Endothelial cell of umbilical vein (primary cell): ENCODE measurements at regions of chr11 and their contacts with region 1.

Region 1: GRCh38 chr11:45771566-45772448 is 33.1 kb upstream of the SLC35C1 start:
- DNase-seq: peak; percentile 78
- H3K4me3 ChIP-seq: peak overlapping the region; percentile 39 to 54 (median 50)
- H3K27ac ChIP-seq: no peak overlapping the region
- H3K4me1 ChIP-seq: peaks cover 5% of the 10 kb centered on the region
- H3K27me3 ChIP-seq: peaks cover 0 to 1% of the 10 kb centered on the region in 2 experiments
- CTCF ChIP-seq: peak; percentile 95 to 98
- POLR2A ChIP-seq: no peak

Region 2: GRCh38 chr11:45252134-45252855 is 519.5 kb before region 1 on chr11:
- CTCF ChIA-PET with region 1: interaction called, 17 read pairs
- POLR2A ChIA-PET with region 1: no interaction called
- dilution Hi-C with region 1: no loop called
- intact Hi-C with region 1: no loop called
- DNase-seq: peak; percentile 14
- H3K4me3 ChIP-seq: no peak overlapping the region
- H3K27ac ChIP-seq: no peak overlapping the region
- H3K4me1 ChIP-seq: no peaks in the 10 kb centered on the region
- H3K27me3 ChIP-seq: peaks cover 2 to 8% of the 10 kb centered on the region in 2 experiments
- CTCF ChIP-seq: peak; percentile 71 to 76
- POLR2A ChIP-seq: no peak

Region 3: GRCh38 chr11:45354976-45355705 is 416.7 kb before region 1 on chr11:
- CTCF ChIA-PET with region 1: interaction called, 17 read pairs
- POLR2A ChIA-PET with region 1: no interaction called
- dilution Hi-C with region 1: no loop called
- intact Hi-C with region 1: no loop called
- DNase-seq: peak; percentile 47
- H3K4me3 ChIP-seq: peak overlapping the region in 2 of 3 experiments; percentile 18 to 47
- H3K27ac ChIP-seq: no peak overlapping the region
- H3K4me1 ChIP-seq: no peaks in the 10 kb centered on the region
- H3K27me3 ChIP-seq: peaks cover 4 to 28% of the 10 kb centered on the region in 2 experiments
- CTCF ChIP-seq: no peak
- POLR2A ChIP-seq: no peak

Region 4: GRCh38 chr11:45405916-45406670 is 365.7 kb before region 1 on chr11:
- CTCF ChIA-PET with region 1: interaction called, 47 read pairs
- POLR2A ChIA-PET with region 1: no interaction called
- dilution Hi-C with region 1: no loop called
- intact Hi-C with region 1: no loop called
- DNase-seq: peak; percentile 22
- H3K4me3 ChIP-seq: no peak overlapping the region
- H3K27ac ChIP-seq: no peak overlapping the region
- H3K4me1 ChIP-seq: peaks cover 4% of the 10 kb centered on the region
- H3K27me3 ChIP-seq: peaks cover 0 to 2% of the 10 kb centered on the region in 2 experiments
- CTCF ChIP-seq: peak; percentile 33 to 38
- POLR2A ChIP-seq: no peak

Region 5: DNA sequence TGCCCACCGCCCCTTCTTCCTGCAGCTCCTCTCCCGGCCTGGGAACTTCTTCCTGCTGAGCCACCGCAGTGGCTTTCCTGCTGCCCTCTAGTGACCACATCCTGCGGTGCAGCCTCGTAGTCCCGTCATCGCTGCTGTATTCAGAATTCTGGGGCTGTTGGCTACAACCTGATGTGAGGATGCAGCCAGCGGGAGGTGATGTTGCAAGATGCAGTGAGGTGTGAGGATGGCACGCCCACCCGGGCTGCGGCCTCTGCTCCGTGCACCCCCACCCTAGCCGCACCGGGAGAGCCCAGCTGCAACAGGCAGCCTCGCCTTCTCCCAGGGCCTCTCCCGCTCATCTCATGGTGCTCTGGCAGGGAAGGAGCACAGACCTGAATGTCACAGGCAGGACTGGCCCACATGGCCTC is 116.5 kb before region 1 on chr11:
- CTCF ChIA-PET with region 1: interaction called, 50 read pairs
- POLR2A ChIA-PET with region 1: no interaction called
- dilution Hi-C with region 1: no loop called
- intact Hi-C with region 1: loop called (anchors 1 kb)
- DNase-seq: peak; percentile 78
- H3K4me3 ChIP-seq: no peak overlapping the region
- H3K27ac ChIP-seq: no peak overlapping the region
- H3K4me1 ChIP-seq: peaks cover 41% of the 10 kb centered on the region
- H3K27me3 ChIP-seq: no peaks in the 10 kb centered on the region
- CTCF ChIP-seq: peak; percentile 92 to 95
- POLR2A ChIP-seq: no peak

Region 6: GRCh38 chr11:45761659-45762058 is 10.1 kb before region 1 on chr11:
- CTCF ChIA-PET with region 1: interaction called, 44 read pairs
- POLR2A ChIA-PET with region 1: no interaction called
- dilution Hi-C with region 1: no loop called
- intact Hi-C with region 1: no loop called
- DNase-seq: no peak
- H3K4me3 ChIP-seq: no peak overlapping the region
- H3K27ac ChIP-seq: no peak overlapping the region
- H3K4me1 ChIP-seq: no peaks in the 10 kb centered on the region
- H3K27me3 ChIP-seq: peaks cover 0 to 1% of the 10 kb centered on the region in 2 experiments
- CTCF ChIP-seq: no peak
- POLR2A ChIP-seq: no peak

Region 7: GRCh38 chr11:45879803-45880686 is 108.2 kb after region 1 on chr11:
- CTCF ChIA-PET with region 1: no interaction called
- POLR2A ChIA-PET with region 1: no interaction called
- dilution Hi-C with region 1: no loop called
- intact Hi-C with region 1: no loop called
- DNase-seq: no peak
- H3K4me3 ChIP-seq: no peak overlapping the region
- H3K27ac ChIP-seq: no peak overlapping the region
- H3K4me1 ChIP-seq: no peaks in the 10 kb centered on the region
- H3K27me3 ChIP-seq: no peaks in the 10 kb centered on the region
- CTCF ChIP-seq: no peak
- POLR2A ChIP-seq: no peak